AG04449 (cell line): ENCODE measurements at regions of chr12 and their contacts with region 1.

Region 1: DNA sequence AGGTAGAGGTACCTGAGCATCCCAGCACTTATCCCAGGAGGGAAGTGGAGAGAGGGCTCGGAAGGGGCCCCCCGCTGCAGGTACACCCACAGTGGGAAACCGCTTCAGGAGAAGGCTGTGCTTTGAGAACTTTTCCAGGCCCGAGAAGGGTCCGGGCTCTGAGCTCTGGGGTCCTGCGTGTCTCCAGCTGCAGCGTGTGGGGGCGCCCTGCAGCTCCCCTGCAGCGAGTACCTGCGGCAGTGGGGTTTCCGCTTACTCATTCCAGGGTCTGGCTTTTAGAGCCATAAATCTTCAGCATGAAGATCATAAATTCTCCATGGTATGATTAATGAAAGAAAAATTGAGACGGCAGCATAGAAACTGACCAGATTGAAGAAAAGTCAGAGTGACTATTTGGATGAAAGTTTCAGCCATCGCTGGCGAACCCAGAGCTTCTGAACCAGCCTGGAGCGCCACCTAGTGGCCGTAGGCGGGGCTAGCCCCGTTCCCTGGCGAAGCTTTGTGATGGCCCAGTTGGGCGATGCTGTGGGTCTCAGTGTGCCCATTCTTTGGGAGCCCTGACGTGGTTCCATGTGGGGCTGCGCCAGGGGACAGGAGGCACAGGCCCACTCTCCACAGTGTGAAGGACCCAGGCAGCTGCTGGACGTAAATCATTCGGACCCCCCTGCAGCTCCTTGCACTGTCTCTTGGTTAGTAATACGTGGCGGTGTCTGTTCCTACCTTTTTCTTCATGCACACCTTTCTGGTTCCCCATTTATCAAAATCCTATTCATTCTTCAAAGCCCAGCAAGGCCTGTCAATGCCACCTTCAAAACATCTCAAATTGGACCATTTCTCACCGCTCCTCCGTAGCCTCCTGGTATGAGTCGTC is 198.2 kb downstream of the TSPAN9 start:
- DNase-seq: no peak
- H3K4me3 ChIP-seq: no peak overlapping the region
- CTCF ChIP-seq: peak; percentile 95

Region 2: GRCh38 chr12:3041558-3042164 is 233.7 kb before region 1 on chr12:
- CTCF ChIA-PET with region 1: interaction called, 15 read pairs
- POLR2A ChIA-PET with region 1: no interaction called
- DNase-seq: no peak
- H3K4me3 ChIP-seq: no peak overlapping the region
- CTCF ChIP-seq: peak; percentile 83

Region 3: DNA sequence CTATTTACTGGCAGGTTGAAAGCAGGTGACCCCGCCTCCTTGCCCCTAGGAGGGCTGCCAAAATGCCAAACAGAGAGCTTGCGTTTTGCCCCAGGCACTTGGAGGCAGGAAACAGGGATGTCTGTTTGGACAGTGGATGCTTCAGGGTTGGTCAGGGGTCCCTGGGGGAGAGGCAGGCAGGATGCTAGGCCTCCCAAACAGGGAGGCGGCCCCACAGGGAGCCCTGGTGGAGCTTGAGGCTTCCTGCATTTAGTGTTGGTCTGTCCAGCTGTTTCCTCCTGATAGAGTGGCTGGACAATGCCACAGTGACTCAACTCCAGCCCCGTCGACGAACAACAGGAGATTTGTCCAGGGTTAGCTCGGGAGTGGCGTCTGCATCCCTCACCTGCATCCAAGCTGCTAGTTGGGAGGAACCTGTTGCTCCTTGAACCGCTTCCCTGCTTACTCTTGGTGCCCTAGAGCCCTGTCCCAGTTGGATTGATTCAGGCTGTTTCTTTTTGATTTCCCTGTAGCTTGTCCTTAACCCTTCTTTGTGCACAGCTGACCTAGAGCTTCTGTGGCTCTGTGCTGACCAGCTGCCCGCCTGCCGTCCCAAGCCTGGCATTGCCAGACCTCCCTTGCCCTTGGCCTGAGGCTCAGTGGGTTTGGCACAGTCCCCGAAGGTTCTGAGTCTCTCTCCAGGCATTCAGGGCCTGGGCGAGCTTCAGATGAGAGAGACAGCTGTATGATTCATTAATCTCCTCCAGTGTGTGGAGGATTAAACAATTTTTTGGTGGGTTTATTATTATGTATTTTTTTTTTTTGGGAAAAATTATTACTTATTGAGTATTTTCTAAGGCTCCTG is 152.3 kb before region 1 on chr12:
- CTCF ChIA-PET with region 1: interaction called, 534 read pairs
- POLR2A ChIA-PET with region 1: no interaction called
- DNase-seq: no peak
- H3K4me3 ChIP-seq: no peak overlapping the region
- CTCF ChIP-seq: no peak

Region 4: GRCh38 chr12:3150931-3151835 is 124.2 kb before region 1 on chr12:
- CTCF ChIA-PET with region 1: interaction called, 60 read pairs
- POLR2A ChIA-PET with region 1: interaction called, 3 read pairs
- DNase-seq: no peak
- H3K4me3 ChIP-seq: no peak overlapping the region
- CTCF ChIP-seq: no peak

Region 5: GRCh38 chr12:3218228-3219171 is 56.9 kb before region 1 on chr12:
- CTCF ChIA-PET with region 1: interaction called, 14 read pairs
- POLR2A ChIA-PET with region 1: no interaction called
- DNase-seq: no peak
- H3K4me3 ChIP-seq: no peak overlapping the region
- CTCF ChIP-seq: no peak

Region 6: DNA sequence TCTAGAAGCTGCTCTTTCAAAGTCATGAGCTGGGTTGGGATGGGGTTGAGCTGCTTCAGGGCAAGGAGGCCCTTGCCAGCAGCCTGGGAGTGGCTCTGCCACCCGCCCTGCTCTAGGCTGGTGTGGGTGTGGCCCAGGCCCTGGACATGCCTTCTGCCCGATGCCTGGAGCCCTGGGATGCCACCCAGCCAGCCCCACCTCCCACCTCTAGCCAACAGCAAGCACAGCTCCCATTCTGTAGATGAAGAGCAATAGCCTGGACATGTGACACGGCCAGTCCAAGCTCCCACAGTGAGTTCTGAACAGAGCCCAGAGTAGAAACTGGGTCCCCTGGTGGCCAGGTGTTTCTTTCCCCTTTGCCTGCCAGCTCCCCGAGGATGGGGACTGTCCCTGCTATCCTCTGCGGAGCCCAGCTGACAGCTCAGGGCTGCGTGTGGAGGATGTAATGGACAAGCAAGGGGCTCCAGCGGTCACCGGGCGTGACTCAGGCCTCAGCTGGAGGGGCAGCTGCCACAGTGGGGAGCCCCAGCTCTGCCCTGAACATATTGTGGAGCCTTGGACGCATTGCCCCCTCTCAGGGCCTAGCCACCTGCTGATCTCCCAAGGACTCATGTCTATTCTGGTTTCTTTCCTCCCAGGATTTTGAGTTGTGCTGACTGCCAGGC is 33.1 kb before region 1 on chr12:
- CTCF ChIA-PET with region 1: interaction called, 14 read pairs
- POLR2A ChIA-PET with region 1: no interaction called
- DNase-seq: no peak
- H3K4me3 ChIP-seq: no peak overlapping the region
- CTCF ChIP-seq: no peak

Region 7: DNA sequence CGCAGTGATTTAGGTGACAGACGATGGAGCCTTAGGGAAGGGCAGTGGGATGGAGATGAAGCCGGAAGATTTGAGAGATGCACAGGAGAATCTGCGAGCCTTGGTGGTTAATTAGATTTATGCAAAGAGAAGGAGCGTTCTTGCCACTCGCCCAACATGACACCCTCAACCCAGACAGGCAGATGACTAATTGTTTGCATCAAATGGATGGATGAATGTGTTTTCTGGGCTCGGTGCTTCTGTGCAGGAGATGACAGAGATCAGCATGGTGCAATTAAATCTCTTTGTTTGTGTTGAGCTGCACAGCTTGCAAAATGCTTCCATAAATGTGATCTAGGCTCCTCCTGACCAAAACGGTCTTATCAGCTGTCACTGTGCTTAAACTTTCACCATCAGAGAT is 13.3 kb after region 1 on chr12:
- CTCF ChIA-PET with region 1: interaction called, 25 read pairs
- POLR2A ChIA-PET with region 1: no interaction called
- DNase-seq: no peak
- H3K4me3 ChIP-seq: no peak overlapping the region
- CTCF ChIP-seq: no peak

Region 8: DNA sequence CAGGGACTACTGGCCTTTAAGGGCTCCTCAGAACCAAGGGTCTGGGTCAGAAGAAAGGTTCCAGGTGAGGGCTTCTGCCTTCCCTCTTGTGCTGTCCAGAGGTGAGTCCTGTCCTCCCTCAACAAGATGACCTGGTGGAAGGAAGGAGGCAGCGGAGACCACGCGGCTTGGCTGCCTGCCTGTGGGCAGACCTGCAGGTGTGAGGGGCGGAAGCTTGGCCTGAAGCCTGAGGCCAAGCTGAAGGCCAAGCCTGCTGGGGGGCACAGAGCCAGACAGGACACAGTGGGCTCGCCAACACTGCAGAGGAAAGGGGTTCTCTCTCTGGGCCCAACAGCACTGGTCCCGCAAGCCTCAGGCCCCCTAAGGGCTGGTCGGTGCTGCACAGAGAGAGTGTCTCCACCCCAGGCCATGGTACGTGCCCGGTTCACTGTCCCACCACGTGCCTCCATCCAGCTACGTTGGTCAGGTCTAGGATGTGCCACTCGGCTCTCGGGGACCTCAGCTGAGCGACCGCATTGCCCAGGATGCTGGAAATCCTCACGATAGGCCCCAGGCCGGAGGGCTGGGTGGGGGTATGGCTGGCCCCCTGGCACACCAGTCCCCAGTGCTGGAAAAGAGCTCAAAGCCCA is 45.6 kb after region 1 on chr12:
- CTCF ChIA-PET with region 1: no interaction called
- POLR2A ChIA-PET with region 1: no interaction called
- DNase-seq: no peak
- H3K4me3 ChIP-seq: no peak overlapping the region
- CTCF ChIP-seq: no peak

Region 9: DNA sequence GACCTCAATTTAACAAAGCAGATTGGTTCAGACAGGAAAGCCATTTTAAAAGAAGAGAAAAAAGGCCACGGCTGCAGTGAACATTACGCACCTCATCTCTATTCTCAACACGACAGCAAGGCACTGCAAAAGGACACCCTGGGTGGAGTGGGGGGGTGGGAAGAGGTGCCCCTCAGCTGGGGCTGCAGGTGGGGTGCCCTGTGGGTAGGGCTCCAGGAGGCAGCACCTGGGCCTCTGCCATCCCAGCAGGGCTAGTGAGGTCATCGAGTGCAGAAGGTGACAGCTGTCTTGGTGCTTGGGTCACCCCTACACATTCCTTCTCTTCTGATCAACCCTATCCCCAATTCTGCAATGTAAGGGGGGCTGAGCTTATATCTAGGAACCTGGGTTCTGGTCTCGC is 72.6 kb after region 1 on chr12:
- CTCF ChIA-PET with region 1: no interaction called
- POLR2A ChIA-PET with region 1: no interaction called
- DNase-seq: no peak
- H3K4me3 ChIP-seq: no peak overlapping the region
- CTCF ChIP-seq: no peak